Adrenal gland (tissue), 19 donors: ENCODE measurements at regions of chr1 and their contacts with region 1.

Region 1: DNA sequence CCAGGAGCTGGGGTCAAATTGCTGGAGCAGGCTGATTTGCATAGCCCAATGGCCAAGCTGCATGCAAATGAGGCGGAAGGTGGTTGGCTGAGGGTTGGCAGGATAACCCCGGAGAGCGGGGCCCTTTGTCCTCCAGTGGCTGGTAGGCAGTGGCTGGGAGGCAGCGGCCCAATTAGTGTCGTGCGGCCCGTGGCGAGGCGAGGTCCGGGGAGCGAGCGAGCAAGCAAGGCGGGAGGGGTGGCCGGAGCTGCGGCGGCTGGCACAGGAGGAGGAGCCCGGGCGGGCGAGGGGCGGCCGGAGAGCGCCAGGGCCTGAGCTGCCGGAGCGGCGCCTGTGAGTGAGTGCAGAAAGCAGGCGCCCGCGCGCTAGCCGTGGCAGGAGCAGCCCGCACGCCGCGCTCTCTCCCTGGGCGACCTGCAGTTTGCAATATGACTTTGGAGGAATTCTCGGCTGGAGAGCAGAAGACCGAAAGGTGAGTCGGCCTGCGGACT is at the start of gene GADD45A:
- DNase-seq: peak; percentile 98 to 100 (median 99)
- H3K4me3 ChIP-seq: peak within 1 kb of the TSS; percentile 19 to 64 (median 46)
- H3K27ac ChIP-seq: peak within 1 kb of the TSS; percentile 90 to 97 (median 93)
- H3K4me1 ChIP-seq: peaks cover 12 to 27% of the 10 kb centered on the region in 2 donors
- H3K27me3 ChIP-seq: no peaks in the 10 kb centered on the region
- CTCF ChIP-seq: no peak
- POLR2A ChIP-seq: peak; percentile 96 to 100
- total RNA-seq, gene GADD45A: 5.3 to 26.9 (median 11.9) TPM

Region 2: GRCh38 chr1:67561704-67562113 is 123.4 kb before region 1 on chr1:
- intact Hi-C with region 1: loop called in 1 of 2 experiments (anchors 10 kb)
- DNase-seq: peak; percentile 86 to 97 (median 94)
- H3K4me3 ChIP-seq: no peak overlapping the region
- H3K27ac ChIP-seq: no peak overlapping the region
- H3K4me1 ChIP-seq: peaks cover 3 to 18% of the 10 kb centered on the region in 2 donors
- H3K27me3 ChIP-seq: no peaks in the 10 kb centered on the region
- CTCF ChIP-seq: peak; percentile 73 to 92 (median 84)
- POLR2A ChIP-seq: no peak

Region 3: DNA sequence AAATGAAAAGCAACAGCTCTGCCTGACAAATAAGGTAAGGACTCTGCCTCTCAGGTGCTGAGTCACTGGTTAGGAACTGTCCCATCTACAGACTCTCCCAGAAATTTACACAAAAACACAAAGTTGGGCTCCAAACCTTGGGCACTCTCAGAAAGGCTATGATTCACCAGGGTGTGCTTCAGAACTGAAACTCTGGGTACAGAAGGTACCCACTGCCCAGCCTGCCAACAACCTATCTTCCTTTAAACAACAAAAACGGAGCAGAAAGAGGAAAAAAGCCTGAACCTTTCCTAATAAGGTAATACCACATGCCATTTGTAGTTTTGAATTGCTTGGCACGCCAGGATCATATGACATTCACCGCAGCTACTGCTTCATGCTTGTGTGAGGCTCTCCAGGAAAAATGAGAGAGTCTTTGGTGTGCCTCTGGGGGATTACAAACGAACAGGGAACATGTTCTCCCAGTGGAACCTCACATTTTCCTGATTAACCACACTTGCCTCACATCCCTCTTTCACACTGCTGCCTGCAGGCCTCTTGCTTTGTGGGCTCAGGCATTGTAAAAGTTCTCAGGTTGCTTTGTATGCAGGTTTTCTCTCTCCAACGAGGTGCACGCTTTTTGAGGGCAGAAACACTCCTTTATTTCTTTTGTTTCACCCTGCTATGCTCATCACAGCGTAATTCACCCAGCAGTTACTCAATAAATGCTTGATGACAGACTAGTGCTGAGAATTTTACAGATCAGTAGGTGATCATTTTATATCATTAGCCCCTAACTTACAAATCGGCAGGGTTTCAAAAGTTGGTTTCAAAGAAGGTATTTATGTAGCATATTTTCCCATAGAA is 65.0 kb after region 1 on chr1:
- intact Hi-C with region 1: loop called in 1 of 2 experiments (anchors 10 kb)
- DNase-seq: peak in 6 of 7 donors; percentile 54 to 65 (median 57)
- H3K4me3 ChIP-seq: peak overlapping the region in 1 of 4 donors; percentile 4
- H3K27ac ChIP-seq: peak overlapping the region in 4 of 5 donors; percentile 44 to 79 (median 58)
- H3K4me1 ChIP-seq: peaks cover 24 to 34% of the 10 kb centered on the region in 2 donors
- H3K27me3 ChIP-seq: no peaks in the 10 kb centered on the region
- CTCF ChIP-seq: no peak
- POLR2A ChIP-seq: peak in 1 of 2 donors; percentile 8

Region 4: GRCh38 chr1:67832737-67833601 is 147.9 kb after region 1 on chr1 and contains the start of gene GNG12:
- intact Hi-C with region 1: loop called in 1 of 2 experiments (anchors 5 kb)
- DNase-seq: peak; percentile 80 to 88 (median 81)
- H3K4me3 ChIP-seq: peak within 1 kb of the TSS; percentile 10 to 79 (median 67)
- H3K27ac ChIP-seq: peak within 1 kb of the TSS; percentile 69 to 94 (median 89)
- H3K4me1 ChIP-seq: peaks cover 29 to 67% of the 10 kb centered on the region in 2 donors
- H3K27me3 ChIP-seq: no peaks in the 10 kb centered on the region
- CTCF ChIP-seq: no peak
- POLR2A ChIP-seq: peak; percentile 26 to 71
- total RNA-seq, gene GNG12: 75.7 to 121 (median 85.2) TPM